ENCODE measurements at regions of chr11 and their contacts with region 1.

Region 1: DNA sequence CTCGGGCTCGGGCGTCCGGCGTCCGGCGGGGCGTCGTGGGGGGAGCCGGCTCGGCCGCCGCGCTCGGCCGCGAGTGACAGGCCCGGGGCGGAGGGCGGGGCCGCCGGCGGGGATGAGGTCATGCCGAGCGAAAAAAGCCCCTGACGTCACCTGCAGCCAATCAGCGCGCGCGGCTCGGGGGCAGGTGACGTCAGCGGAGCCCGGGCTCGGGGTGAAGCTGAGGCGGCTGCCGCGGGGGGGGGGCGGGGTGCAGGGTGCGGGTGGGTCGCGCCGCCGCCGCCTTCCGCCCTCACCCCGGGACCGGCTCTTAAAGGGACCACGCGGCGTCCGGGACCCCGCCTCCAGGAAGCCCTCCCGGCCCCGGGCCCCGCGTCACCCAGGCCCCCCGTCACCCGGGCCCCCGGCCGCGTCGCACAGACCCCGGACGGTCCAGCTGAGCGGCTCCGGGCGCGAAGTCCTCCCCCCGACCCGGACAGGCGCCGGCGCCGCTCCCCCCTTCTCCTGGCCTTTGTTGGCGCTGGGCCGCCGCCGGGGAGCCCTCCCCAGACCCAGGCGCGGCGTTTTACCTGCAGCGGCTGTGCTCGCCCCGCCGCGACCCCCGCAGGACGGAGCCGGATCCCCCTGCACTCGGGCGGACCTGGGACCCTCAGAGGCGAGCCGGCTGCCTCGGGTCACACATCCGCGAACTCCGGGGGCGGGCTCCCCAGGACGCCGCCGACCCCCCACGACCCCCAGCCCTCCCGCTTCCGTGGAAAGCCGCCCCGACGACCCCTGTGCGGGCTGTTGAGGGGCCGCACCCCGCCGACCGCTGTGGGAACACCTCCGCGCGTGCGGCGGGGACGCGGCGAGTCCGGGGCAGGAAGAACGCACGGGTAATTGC is at the start of gene DUSP8:
- DNase-seq: peak; percentile 83
- H3K4me3 ChIP-seq: peak within 1 kb of the TSS in 2 of 3 experiments; percentile 36 to 38
- H3K27ac ChIP-seq: no peak within 1 kb of the TSS
- H3K4me1 ChIP-seq: peaks cover 10% of the 10 kb centered on the region
- H3K27me3 ChIP-seq: peaks cover 8% of the 10 kb centered on the region
- CTCF ChIP-seq: no peak
- total RNA-seq, gene DUSP8: 1.2 to 1.4 TPM

Region 2: DNA sequence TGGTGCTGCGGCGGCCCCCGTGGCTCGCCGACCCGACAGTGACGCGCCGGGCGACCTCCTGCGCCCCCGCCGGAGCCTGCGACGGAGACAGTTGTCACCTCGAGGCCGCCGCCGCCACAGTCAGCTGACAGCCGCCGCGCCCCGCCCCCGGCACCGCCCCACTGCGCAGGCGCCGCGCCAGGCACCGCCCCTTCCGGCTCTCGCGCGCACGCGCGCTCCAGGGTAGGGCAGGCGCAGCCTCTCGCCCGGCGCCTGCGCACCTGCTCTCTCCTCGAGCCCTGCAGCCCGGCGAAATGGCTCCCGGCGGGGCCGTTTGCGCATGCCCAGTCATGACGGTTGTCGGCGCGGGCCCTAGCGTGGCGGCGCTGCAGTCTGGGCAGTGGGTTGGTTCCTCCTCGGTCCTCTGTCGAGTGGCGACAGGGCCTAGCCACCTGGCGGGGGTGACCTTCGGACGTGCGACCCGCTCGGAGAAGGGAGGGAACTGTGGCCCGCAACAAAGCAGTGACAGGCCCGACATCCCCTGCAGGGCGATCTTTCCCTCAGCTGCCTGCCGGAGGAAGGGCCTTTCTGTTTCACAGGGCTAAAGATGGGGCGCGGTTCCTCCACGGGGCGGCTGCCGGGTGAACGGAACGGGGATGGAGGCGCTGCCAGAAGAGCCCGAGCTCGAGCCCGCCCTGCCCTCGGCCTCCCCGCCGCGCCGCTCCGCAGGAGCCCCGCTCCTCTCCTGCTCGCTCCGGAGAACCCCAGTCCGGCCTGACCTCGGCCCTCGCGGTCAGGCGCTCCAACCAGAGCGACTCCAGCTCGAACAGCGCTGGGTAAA is 262.7 kb before region 1 on chr11 and contains the start of gene TOLLIP:
- CTCF ChIA-PET with region 1: no interaction called
- dilution Hi-C with region 1: no loop called
- in situ Hi-C with region 1: no loop called
- intact Hi-C with region 1: loop called (anchors 5 kb)
- DNase-seq: peak; percentile 84
- H3K4me3 ChIP-seq: peak within 1 kb of the TSS; percentile 58 to 84 (median 72)
- H3K27ac ChIP-seq: peak within 1 kb of the TSS; percentile 61
- H3K4me1 ChIP-seq: peaks cover 35% of the 10 kb centered on the region
- H3K27me3 ChIP-seq: no peaks in the 10 kb centered on the region
- CTCF ChIP-seq: peak in 1 of 2 donors; percentile 27
- total RNA-seq, gene TOLLIP: 49.3 to 78.4 TPM

Region 3: DNA sequence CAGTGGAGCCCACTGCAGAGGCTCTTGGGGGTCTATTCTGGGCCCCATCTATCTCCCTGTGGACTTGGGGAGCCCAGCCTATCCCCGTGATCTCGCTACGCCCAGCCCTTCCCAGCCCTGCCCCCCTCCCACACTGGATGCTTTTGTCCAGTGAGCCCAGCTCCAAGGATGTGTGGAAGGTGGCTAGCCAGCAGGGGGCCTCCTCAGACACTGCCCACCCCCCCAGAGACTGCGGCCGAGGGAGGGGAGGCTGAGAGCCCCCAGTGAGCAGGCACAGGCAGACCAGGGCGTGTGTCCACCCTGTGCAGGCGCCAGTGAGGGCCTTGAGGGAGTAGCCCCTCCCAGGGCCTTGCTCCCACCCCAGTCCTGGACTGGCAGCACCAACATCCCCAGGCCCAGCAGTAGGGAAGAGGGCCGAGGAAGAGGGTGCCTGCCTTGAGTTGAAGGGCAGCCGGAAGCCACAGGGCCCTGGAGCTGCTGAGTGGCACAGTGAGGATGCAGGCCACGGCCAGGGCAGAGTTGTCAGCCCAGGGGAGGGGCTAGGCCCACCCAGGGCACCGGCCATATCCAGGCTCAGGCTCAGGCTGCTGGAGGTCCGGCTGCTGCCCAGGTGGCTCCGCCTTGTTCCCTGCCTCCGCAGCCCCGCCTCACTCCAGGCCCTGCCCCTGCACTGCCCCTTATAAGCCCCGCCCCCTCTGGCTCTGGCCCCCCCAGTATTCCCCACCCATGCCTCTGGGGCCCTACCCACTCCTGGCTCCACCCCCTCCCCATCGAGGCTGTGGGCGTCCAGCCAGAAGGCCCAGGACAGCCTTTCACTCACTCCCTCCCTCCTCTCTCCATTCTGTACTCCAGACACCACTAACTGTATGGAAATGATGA is 113.9 kb before region 1 on chr11:
- CTCF ChIA-PET with region 1: no interaction called
- dilution Hi-C with region 1: no loop called
- in situ Hi-C with region 1: no loop called
- intact Hi-C with region 1: loop called (anchors 5 kb)
- DNase-seq: no peak
- H3K4me3 ChIP-seq: no peak overlapping the region
- H3K27ac ChIP-seq: no peak overlapping the region
- H3K4me1 ChIP-seq: no peaks in the 10 kb centered on the region
- H3K27me3 ChIP-seq: no peaks in the 10 kb centered on the region
- CTCF ChIP-seq: peak in 1 of 2 donors; percentile 30

Region 4: GRCh38 chr11:1532014-1532586 is 40.3 kb before region 1 on chr11:
- CTCF ChIA-PET with region 1: no interaction called
- dilution Hi-C with region 1: no loop called
- in situ Hi-C with region 1: no loop called
- intact Hi-C with region 1: loop called (anchors 5 kb)
- DNase-seq: peak; percentile 79
- H3K4me3 ChIP-seq: no peak overlapping the region
- H3K27ac ChIP-seq: peak overlapping the region; percentile 68
- H3K4me1 ChIP-seq: peaks cover 57% of the 10 kb centered on the region
- H3K27me3 ChIP-seq: no peaks in the 10 kb centered on the region
- CTCF ChIP-seq: peak in 1 of 2 donors; percentile 32

Region 5: DNA sequence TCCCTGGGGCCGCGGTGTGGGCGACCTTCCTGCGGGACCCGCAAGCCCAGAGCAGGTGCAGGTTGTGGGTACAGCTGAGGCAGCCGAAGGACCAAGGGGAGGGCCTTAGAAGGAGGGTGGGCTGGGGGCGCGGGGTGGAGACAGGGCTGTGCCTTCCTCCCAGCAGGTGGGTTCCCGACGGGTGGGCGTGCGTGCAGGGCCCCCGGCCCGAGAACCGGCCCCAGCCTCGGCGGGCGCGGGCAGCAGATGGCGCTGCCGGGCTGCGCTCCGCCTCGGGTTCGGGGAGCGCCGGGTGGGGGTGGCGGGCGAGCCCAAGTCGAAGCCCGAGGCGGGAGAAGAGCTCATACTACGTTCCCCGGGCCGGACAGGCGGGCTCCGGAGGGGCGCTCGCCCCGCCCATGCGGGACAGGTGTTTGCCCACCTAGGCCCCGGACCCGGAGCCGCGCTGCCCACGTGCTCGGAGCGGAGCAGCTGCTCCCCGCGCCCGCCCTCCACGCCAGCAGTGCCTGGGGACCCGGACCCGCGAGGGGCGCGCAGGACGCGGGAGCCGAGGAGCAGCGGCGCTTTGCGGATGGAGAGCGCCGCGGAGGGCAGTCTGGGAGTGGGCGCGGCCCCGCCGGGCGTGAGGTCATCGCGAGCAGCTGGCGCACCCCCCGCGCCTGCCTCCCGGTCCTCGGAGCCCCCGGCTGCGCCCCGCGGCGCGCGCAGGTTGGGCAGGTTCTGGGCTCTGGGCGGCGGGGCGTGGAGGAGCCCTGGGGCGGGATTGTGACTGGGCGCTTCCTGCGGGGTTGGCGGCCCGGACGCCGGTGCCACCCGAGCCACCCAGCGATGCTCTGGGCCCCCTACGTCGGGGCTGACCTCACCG is 25.7 kb before region 1 on chr11:
- CTCF ChIA-PET with region 1: interaction called, 23 read pairs
- dilution Hi-C with region 1: no loop called
- in situ Hi-C with region 1: no loop called
- intact Hi-C with region 1: loop called (anchors 2 kb)
- DNase-seq: peak; percentile 35
- H3K4me3 ChIP-seq: peak overlapping the region in 2 of 3 experiments; percentile 11 to 27
- H3K27ac ChIP-seq: no peak overlapping the region
- H3K4me1 ChIP-seq: peaks cover 7% of the 10 kb centered on the region
- H3K27me3 ChIP-seq: peaks cover 16% of the 10 kb centered on the region
- CTCF ChIP-seq: peak; percentile 35 to 66